ENCODE measurements at regions of chr13 and their contacts with region 1.

Region 1: DNA sequence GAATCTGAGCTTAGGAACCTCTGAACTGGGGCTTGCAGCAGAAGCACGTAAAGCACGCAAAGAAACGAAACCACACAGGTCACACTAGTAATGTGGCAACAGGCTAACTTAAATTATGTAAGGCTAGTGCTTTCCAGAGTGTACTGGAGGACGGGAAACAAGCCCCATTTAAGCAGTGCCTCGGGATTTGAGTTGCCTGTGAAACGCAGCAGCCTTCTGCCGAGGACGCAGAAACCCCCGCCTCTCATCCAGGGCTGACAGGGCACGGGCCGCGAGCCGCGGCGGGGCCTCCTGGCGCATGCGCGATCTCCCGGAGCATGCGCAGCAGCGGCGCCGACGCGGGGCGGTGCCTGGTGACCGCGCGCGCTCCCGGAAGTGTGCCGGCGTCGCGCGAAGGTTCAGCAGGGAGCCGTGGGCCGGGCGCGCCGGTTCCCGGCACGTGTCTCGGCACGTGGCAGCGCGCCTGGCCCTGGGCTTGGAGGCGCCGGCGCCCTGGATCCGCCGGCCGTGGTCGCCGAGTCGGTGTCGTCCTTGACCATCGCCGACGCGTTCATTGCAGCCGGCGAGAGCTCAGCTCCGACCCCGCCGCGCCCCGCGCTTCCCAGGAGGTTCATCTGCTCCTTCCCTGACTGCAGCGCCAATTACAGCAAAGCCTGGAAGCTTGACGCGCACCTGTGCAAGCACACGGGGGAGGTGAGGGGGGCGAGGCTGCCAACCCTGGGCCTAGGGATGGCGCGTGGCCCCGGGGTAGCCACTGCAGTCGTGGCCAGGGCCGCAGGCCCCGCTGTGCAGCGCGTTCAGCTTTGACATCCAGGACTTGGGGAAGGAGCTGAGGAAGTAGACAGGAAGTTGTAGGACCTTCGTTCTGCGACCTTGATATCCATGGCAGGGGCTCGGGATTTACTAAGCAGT is at the start of gene GTF3A:
- DNase-seq: peak; percentile 71 to 82
- ATAC-seq: peak; percentile 72 to 77
- H3K4me3 ChIP-seq: peak within 1 kb of the TSS; percentile 67 to 86 (median 77)
- H3K27ac ChIP-seq: peak within 1 kb of the TSS; percentile 92 to 97 (median 96)
- H3K4me1 ChIP-seq: peaks cover 30 to 36% of the 10 kb centered on the region in 2 donors
- H3K27me3 ChIP-seq: no peaks in the 10 kb centered on the region
- CTCF ChIP-seq: peak in 1 of 5 experiments; percentile 22
- POLR2A ChIP-seq: peak; percentile 87 to 88
- total RNA-seq, gene GTF3A: 179 to 304 (median 242) TPM

Region 2: DNA sequence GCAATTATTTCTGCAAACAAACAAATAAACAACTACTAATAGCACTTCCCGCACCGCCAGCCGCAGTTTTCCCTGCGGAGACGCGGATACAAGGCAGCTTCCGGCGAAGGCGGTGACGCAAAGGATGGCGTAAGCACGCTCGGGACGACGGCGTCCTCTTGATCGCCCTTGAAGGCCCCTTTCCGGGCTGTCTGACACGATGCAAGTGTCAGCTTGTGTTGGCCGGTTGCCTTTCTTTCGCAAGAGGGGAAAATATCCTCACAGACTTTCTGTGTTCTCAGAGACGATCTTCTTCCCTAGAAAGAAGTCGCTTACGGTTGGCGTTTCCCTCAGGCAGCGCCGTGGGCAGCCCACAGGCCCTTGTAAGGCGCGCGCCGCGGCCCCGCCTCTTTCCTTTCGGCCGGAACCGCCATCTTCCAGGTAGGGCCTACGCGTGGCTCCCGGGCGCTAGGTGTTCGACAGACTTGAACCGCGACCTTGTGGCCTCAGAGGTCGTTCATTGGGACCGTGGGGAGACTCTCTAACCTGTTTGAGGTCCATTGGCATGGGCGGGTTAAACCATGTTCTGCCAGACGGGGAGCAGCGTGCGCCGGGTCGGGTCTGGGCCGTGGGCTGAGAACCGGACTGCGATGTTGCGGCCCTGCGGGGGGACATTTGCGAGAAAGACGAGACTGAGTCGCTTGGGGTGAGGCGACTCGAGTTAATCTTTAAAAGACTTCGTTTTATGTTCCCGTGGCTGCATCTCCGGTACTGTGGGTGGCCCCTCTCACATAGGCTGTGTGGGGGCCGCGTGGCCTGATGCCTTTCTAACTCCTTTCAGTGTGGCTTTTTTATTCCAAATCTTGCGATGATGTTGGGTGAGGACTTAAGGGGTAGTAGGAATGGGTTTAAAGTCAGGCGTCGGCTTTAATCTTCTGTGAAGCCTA is 173.1 kb before region 1 on chr13 and contains the start of gene RPL21:
- in situ Hi-C with region 1: loop called in 2 of 4 experiments (anchors 25 kb)
- intact Hi-C with region 1: loop called (anchors 2 kb)
- DNase-seq: peak; percentile 95 to 96
- ATAC-seq: peak; percentile 99
- H3K4me3 ChIP-seq: peak within 1 kb of the TSS; percentile 83 to 99 (median 88)
- H3K27ac ChIP-seq: peak within 1 kb of the TSS; percentile 90 to 99 (median 93)
- H3K4me1 ChIP-seq: peaks cover 28 to 38% of the 10 kb centered on the region in 2 donors
- H3K27me3 ChIP-seq: no peaks in the 10 kb centered on the region
- CTCF ChIP-seq: peak in 2 of 5 experiments; percentile 12 to 20
- POLR2A ChIP-seq: peak; percentile 89 to 92
- total RNA-seq, gene RPL21: 774 to 913 (median 796) TPM

Region 3: DNA sequence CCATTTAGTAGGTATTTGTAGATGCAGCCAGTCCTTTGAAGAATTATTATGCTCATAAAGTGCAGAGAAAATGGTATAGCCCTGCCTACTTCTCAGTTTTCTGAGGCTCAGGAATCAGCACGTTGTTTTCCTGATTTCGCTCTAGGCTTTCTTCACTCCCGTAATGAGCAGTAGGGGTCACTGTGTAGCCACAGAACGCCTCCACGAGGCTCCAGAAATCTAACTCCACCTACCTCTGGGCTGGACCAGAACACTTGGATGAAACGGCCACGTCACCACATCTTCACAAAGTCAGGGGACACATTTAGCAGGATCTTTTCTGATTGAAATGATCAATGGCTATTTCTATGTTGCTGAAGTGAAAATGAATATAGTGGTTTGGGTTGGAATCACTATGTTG is 49.9 kb before region 1 on chr13:
- in situ Hi-C with region 1: no loop called
- intact Hi-C with region 1: loop called (anchors 2 kb)
- DNase-seq: peak; percentile 23 to 33
- ATAC-seq: peak; percentile 88 to 94
- H3K4me3 ChIP-seq: no peak overlapping the region
- H3K27ac ChIP-seq: no peak overlapping the region
- H3K4me1 ChIP-seq: no peaks in the 10 kb centered on the region
- H3K27me3 ChIP-seq: peaks cover 0 to 8% (median 6%) of the 10 kb centered on the region in 3 donors
- CTCF ChIP-seq: peak; percentile 35 to 76 (median 54)
- POLR2A ChIP-seq: no peak

Region 4: GRCh38 chr13:27379694-27380641 is 44.5 kb before region 1 on chr13:
- in situ Hi-C with region 1: no loop called
- intact Hi-C with region 1: loop called (anchors 1 kb)
- DNase-seq: peak in 1 of 2 donors; percentile 45
- ATAC-seq: peak in 1 of 2 donors; percentile 60
- H3K4me3 ChIP-seq: no peak overlapping the region
- H3K27ac ChIP-seq: no peak overlapping the region
- H3K4me1 ChIP-seq: peaks cover 0 to 2% of the 10 kb centered on the region in 2 donors
- H3K27me3 ChIP-seq: peaks cover 0 to 2% (median 0%) of the 10 kb centered on the region in 3 donors
- CTCF ChIP-seq: peak; percentile 25 to 49 (median 45)
- POLR2A ChIP-seq: no peak

Region 5: DNA sequence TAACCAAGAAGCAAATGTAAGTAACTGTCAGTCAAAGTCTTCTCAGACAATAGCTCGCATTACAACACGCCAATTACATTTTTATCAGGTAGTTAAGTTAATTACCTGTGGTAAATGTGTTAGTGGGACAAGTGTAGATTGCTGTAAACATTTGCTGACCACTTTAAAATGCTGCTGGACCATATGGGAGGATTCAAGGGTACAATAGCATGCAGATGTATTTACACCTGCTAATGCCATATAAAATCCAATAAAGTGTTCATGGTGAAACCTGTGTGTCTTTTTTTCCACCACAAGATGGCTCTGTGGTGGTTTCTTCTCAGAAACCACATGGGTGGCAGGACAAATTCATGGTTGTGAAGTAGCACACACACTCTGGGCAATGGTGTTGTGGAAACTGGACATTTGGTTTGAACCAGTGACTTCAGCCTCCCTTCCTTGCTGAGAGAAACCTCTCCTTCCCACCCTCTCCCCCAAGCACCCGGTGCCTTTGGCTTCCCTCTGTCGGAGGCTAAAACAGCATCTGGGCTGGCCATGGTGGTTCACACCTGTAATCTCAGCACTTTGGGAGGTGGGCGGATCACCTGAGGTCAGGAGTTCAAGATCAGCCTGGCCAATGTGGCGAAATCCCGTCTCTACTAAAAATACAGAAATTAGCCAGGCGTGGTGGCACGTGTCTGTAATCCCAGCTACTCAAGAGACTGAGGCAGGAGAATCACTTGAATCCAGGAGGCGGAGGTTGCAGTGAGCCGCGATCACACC is 18.1 kb before region 1 on chr13:
- in situ Hi-C with region 1: no loop called
- intact Hi-C with region 1: loop called (anchors 1 kb)
- DNase-seq: no peak
- ATAC-seq: peak; percentile 77 to 80
- H3K4me3 ChIP-seq: no peak overlapping the region
- H3K27ac ChIP-seq: no peak overlapping the region
- H3K4me1 ChIP-seq: peaks cover 6 to 10% of the 10 kb centered on the region in 2 donors
- H3K27me3 ChIP-seq: no peaks in the 10 kb centered on the region
- CTCF ChIP-seq: peak; percentile 39 to 70 (median 61)
- POLR2A ChIP-seq: no peak

Region 6: GRCh38 chr13:27523346-27524073 is 99.0 kb after region 1 on chr13:
- in situ Hi-C with region 1: no loop called
- intact Hi-C with region 1: no loop called
- DNase-seq: no peak
- ATAC-seq: no peak
- H3K4me3 ChIP-seq: no peak overlapping the region
- H3K27ac ChIP-seq: no peak overlapping the region
- H3K4me1 ChIP-seq: no peaks in the 10 kb centered on the region
- H3K27me3 ChIP-seq: peaks cover 4 to 12% (median 10%) of the 10 kb centered on the region in 3 donors
- CTCF ChIP-seq: no peak
- POLR2A ChIP-seq: no peak

Region 7: GRCh38 chr13:27620377-27621115 is 196.0 kb after region 1 on chr13 and contains the start of gene LNX2:
- in situ Hi-C with region 1: loop called in 3 of 4 experiments (anchors 25 kb)
- intact Hi-C with region 1: loop called (anchors 2 kb)
- DNase-seq: peak; percentile 98 to 99
- ATAC-seq: peak; percentile 72 to 73
- H3K4me3 ChIP-seq: peak within 1 kb of the TSS; percentile 69 to 98 (median 90)
- H3K27ac ChIP-seq: peak within 1 kb of the TSS; percentile 95 to 100 (median 99)
- H3K4me1 ChIP-seq: peaks cover 30 to 44% of the 10 kb centered on the region in 2 donors
- H3K27me3 ChIP-seq: no peaks in the 10 kb centered on the region
- CTCF ChIP-seq: peak in 2 of 5 experiments; percentile 24 to 29
- POLR2A ChIP-seq: peak; percentile 92 to 94
- total RNA-seq, gene LNX2: 5.0 to 7.1 (median 6.2) TPM

Region 8: GRCh38 chr13:27839809-27840467 is 415.4 kb after region 1 on chr13:
- in situ Hi-C with region 1: no loop called
- intact Hi-C with region 1: no loop called
- DNase-seq: no peak
- ATAC-seq: no peak
- H3K4me3 ChIP-seq: no peak overlapping the region
- H3K27ac ChIP-seq: no peak overlapping the region
- H3K4me1 ChIP-seq: no peaks in the 10 kb centered on the region
- H3K27me3 ChIP-seq: peaks cover 0 to 13% (median 4%) of the 10 kb centered on the region in 3 donors
- CTCF ChIP-seq: no peak
- POLR2A ChIP-seq: no peak

Region 9: GRCh38 chr13:28138012-28138755 is 713.7 kb after region 1 on chr13 and contains the start of gene PAN3:
- in situ Hi-C with region 1: loop called in 1 of 4 experiments (anchors 25 kb)
- intact Hi-C with region 1: loop called (anchors 10 kb)
- DNase-seq: peak; percentile 77 to 87
- ATAC-seq: peak; percentile 91
- H3K4me3 ChIP-seq: peak within 1 kb of the TSS; percentile 79 to 99 (median 88)
- H3K27ac ChIP-seq: peak within 1 kb of the TSS; percentile 93 to 99 (median 94)
- H3K4me1 ChIP-seq: peaks cover 27 to 37% of the 10 kb centered on the region in 2 donors
- H3K27me3 ChIP-seq: no peaks in the 10 kb centered on the region
- CTCF ChIP-seq: peak in 1 of 5 experiments; percentile 34
- POLR2A ChIP-seq: peak; percentile 56 to 72
- total RNA-seq, gene PAN3: 5.5 to 14.7 (median 9.4) TPM

Measured in gastrocnemius medialis (tissue), 4 donors.